Pancreas (tissue), 10 donors: ENCODE measurements at regions of chr6 and their contacts with region 1.

Region 1: GRCh38 chr6:31680840-31681671 is at the start of gene LY6G5C:
- DNase-seq: peak; percentile 76 to 92 (median 82)
- ATAC-seq: peak; percentile 81 to 93 (median 90)
- H3K4me3 ChIP-seq: peak within 1 kb of the TSS; percentile 19 to 60 (median 42)
- H3K27ac ChIP-seq: peak within 1 kb of the TSS; percentile 38 to 71 (median 53)
- H3K4me1 ChIP-seq: peaks cover 3 to 8% (median 5%) of the 10 kb centered on the region in 3 donors
- H3K27me3 ChIP-seq: no peaks in the 10 kb centered on the region
- CTCF ChIP-seq: peak; percentile 10 to 64 (median 50)
- total RNA-seq, gene LY6G5C: 1.6 to 2.9 (median 2.3) TPM

Region 2: DNA sequence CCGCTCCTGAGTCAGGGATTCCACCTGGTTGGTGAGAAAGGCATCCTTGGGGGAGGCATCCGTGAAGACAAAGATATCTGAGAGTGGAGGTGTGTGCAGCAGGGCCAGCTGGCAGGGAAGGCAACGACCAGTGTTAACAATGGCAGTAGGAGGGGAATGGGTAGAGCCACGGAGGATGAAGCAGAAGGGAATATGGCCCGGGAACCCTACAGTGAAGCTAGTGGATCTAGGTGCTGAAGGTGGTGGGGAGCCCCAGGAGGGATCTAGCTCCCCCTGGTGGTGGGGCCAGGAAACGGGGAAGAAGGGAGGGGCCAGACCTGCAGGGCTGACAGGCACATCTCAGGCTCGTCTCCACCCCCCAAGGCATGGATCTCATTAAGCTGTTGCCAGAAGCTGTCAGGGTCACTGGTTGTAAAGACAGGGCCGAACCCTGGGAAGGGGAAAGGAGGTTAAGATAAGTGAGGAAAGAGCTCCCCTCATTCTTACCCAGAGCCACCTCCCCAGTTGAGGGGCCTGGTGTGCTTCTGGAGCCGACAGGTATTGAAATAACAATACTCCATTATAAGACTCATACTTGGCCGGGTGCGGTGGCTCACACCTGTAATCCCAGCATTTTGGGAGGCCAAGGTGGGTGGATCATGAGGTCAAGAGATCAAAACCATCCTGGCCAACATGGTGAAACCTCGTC is 88.8 kb after region 1 on chr6:
- intact Hi-C with region 1: loop called in 1 of 3 experiments (anchors 5 kb)
- DNase-seq: peak; percentile 64 to 92 (median 80)
- ATAC-seq: peak; percentile 70 to 88 (median 88)
- H3K4me3 ChIP-seq: no peak overlapping the region
- H3K27ac ChIP-seq: no peak overlapping the region
- H3K4me1 ChIP-seq: no peaks in the 10 kb centered on the region
- H3K27me3 ChIP-seq: no peaks in the 10 kb centered on the region
- CTCF ChIP-seq: peak; percentile 64 to 83 (median 75)